Caco-2 (cell line): ENCODE measurements at regions of chr2 and their contacts with region 1.

Region 1: GRCh38 chr2:202178342-202178958 is 59.9 kb downstream of the SUMO1 start:
- DNase-seq: peak; percentile 62 to 77
- H3K4me3 ChIP-seq: no peak overlapping the region
- H3K4me3 Mint-ChIP-seq: no peak overlapping the region
- H3K27ac Mint-ChIP-seq: no peak overlapping the region
- H3K4me1 ChIP-seq: no peaks in the 10 kb centered on the region
- H3K4me1 Mint-ChIP-seq: no peaks in the 10 kb centered on the region
- H3K27me3 ChIP-seq: no peaks in the 10 kb centered on the region
- H3K27me3 Mint-ChIP-seq: no peaks in the 10 kb centered on the region
- CTCF ChIP-seq: peak; percentile 75 to 91

Region 2: GRCh38 chr2:201795607-201796477 is 382.6 kb before region 1 on chr2:
- CTCF ChIA-PET with region 1: interaction called, 3 read pairs
- POLR2A ChIA-PET with region 1: no interaction called
- intact Hi-C with region 1: loop called (anchors 1 kb)
- DNase-seq: peak in 1 of 2 experiments; percentile 48
- H3K4me3 ChIP-seq: no peak overlapping the region
- H3K4me3 Mint-ChIP-seq: no peak overlapping the region
- H3K27ac Mint-ChIP-seq: no peak overlapping the region
- H3K4me1 ChIP-seq: peaks cover 5% of the 10 kb centered on the region; the same call in 1 of the 2 replicates
- H3K4me1 Mint-ChIP-seq: no peaks in the 10 kb centered on the region
- H3K27me3 ChIP-seq: no peaks in the 10 kb centered on the region
- H3K27me3 Mint-ChIP-seq: no peaks in the 10 kb centered on the region
- CTCF ChIP-seq: peak; percentile 58 to 87

Region 3: GRCh38 chr2:201964631-201965206 is 213.7 kb before region 1 on chr2:
- CTCF ChIA-PET with region 1: no interaction called
- POLR2A ChIA-PET with region 1: no interaction called
- intact Hi-C with region 1: loop called (anchors 1 kb)
- DNase-seq: no peak
- H3K4me3 ChIP-seq: no peak overlapping the region
- H3K4me3 Mint-ChIP-seq: no peak overlapping the region
- H3K27ac Mint-ChIP-seq: no peak overlapping the region
- H3K4me1 ChIP-seq: peaks cover 15% of the 10 kb centered on the region
- H3K4me1 Mint-ChIP-seq: peaks cover 15% of the 10 kb centered on the region
- H3K27me3 ChIP-seq: no peaks in the 10 kb centered on the region
- H3K27me3 Mint-ChIP-seq: no peaks in the 10 kb centered on the region
- CTCF ChIP-seq: no peak

Region 4: GRCh38 chr2:202072226-202072625 is 106.2 kb before region 1 on chr2:
- CTCF ChIA-PET with region 1: no interaction called
- POLR2A ChIA-PET with region 1: no interaction called
- intact Hi-C with region 1: loop called (anchors 1 kb)
- DNase-seq: peak in 1 of 2 experiments; percentile 18
- H3K4me3 ChIP-seq: no peak overlapping the region
- H3K4me3 Mint-ChIP-seq: no peak overlapping the region
- H3K27ac Mint-ChIP-seq: no peak overlapping the region
- H3K4me1 ChIP-seq: no peaks in the 10 kb centered on the region
- H3K4me1 Mint-ChIP-seq: no peaks in the 10 kb centered on the region
- H3K27me3 ChIP-seq: no peaks in the 10 kb centered on the region
- H3K27me3 Mint-ChIP-seq: no peaks in the 10 kb centered on the region
- CTCF ChIP-seq: peak; percentile 28 to 43

Region 5: GRCh38 chr2:202104278-202104870 is 74.1 kb before region 1 on chr2:
- CTCF ChIA-PET with region 1: no interaction called
- POLR2A ChIA-PET with region 1: no interaction called
- intact Hi-C with region 1: loop called (anchors 1 kb)
- DNase-seq: peak; percentile 78 to 85
- H3K4me3 ChIP-seq: no peak overlapping the region
- H3K4me3 Mint-ChIP-seq: no peak overlapping the region
- H3K27ac Mint-ChIP-seq: peak overlapping the region; percentile 27
- H3K4me1 ChIP-seq: no peaks in the 10 kb centered on the region
- H3K4me1 Mint-ChIP-seq: no peaks in the 10 kb centered on the region
- H3K27me3 ChIP-seq: no peaks in the 10 kb centered on the region
- H3K27me3 Mint-ChIP-seq: no peaks in the 10 kb centered on the region
- CTCF ChIP-seq: peak; percentile 77 to 81